Activated B cell treated with CpG ODN at 0.5 μM for 24 hours (primary cell): ENCODE measurements at regions of chr2 and their contacts with region 1.

Region 1: DNA sequence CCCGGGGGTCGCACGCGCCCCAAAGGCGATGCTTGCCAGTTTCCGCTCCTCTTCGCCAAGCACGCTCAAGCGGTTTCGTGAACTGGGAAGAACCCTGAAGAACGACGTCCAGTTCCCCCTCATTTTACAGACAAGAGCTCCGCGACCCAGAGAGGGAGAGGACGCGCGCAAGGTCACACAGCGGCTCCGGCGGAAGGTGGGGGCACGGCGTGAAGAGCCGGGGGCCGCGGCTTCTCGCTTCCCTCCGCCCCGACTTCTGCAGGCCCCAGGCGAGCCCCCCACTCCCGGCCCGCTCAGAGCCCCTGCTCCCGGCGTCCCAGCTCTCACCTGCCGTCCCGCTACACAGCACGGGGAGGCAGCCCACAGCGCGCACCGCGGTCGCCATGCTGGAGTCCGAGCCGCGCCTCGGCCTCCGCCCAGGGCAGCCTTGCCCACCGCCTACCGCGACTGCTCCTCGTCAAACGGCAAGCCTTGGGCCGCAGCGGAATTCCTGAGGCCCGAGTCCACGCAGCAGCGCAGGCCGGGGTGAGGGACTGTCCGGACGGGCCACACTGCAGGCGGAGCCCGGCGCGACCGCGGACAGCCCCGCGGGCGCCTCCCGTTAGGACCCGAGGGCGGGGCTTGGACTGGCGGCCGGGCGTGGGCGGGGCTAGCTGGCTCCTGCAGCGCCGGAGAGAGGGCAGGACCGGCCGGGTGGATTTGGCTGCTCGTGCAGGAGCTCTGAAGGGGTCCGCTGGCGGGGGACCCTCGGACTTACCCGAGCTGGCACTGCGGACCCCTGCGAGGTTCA is at the start of gene MRPS5:
- DNase-seq: peak; percentile 93
- ATAC-seq: peak; percentile 97
- H3K4me3 Mint-ChIP-seq: peak within 1 kb of the TSS; percentile 95
- H3K27ac Mint-ChIP-seq: peak within 1 kb of the TSS; percentile 89
- H3K4me1 Mint-ChIP-seq: peaks cover 44% of the 10 kb centered on the region
- H3K27me3 Mint-ChIP-seq: peaks cover 2% of the 10 kb centered on the region
- CTCF ChIP-seq: no peak
- total RNA-seq, gene MRPS5: 44.4 and 44.9 TPM in 2 replicates

Region 2: DNA sequence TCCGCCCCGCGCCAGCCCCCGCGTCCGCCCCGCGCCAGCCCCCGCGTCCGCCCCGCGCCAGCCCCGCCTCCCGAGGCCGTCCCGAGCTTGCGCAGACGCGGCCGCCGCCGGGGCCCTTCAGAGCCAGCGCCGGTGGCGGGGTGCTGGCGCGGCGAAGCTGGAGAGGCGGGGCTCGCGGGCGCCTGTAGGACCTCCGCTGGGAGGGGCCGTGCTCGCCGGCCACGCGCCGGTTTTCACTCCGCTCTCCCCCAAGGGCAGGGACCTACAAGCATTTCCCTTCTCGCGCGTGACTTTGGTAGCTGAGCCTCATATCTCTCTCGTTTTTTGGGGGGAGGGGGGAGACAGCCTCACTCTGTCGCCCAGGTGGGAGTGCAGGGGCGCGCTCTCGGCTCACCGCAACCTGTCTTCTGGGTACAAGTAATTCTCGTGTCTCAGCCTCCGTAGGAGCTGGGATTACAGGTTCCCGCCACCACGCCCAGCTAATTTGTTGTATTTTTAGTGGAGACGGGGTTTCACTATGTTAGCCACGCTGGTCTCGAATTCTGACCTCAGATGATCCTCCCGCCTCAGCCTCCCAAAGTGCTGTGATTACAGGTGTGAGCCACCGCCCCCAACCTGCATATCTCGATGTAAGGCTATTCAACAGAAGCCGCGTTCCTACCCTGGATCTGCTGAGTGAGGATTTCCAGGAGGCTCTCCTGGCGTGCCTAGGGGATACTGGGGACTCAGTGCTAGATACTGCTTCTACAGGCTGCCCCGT is 38.3 kb after region 1 on chr2 and contains the start of gene ZNF514:
- CTCF ChIA-PET with region 1: interaction called, 5 read pairs
- POLR2A ChIA-PET with region 1: interaction called, 40 read pairs
- intact Hi-C with region 1: loop called (anchors 1 kb)
- DNase-seq: peak; percentile 78
- ATAC-seq: peak; percentile 96
- H3K4me3 Mint-ChIP-seq: peak within 1 kb of the TSS; percentile 85
- H3K27ac Mint-ChIP-seq: peak within 1 kb of the TSS; percentile 79
- H3K4me1 Mint-ChIP-seq: peaks cover 21% of the 10 kb centered on the region
- H3K27me3 Mint-ChIP-seq: no peaks in the 10 kb centered on the region
- CTCF ChIP-seq: no peak
- total RNA-seq, gene ZNF514: 19.0 and 24.7 TPM in 2 replicates

Region 3: GRCh38 chr2:95165129-95166064 is 43.8 kb after region 1 on chr2 and contains the start of gene ZNF2:
- CTCF ChIA-PET with region 1: interaction called, 5 read pairs
- POLR2A ChIA-PET with region 1: interaction called, 40 read pairs
- intact Hi-C with region 1: loop called (anchors 1 kb)
- DNase-seq: peak; percentile 91
- ATAC-seq: peak; percentile 93
- H3K4me3 Mint-ChIP-seq: peak within 1 kb of the TSS; percentile 100
- H3K27ac Mint-ChIP-seq: peak within 1 kb of the TSS; percentile 97
- H3K4me1 Mint-ChIP-seq: peaks cover 27% of the 10 kb centered on the region
- H3K27me3 Mint-ChIP-seq: no peaks in the 10 kb centered on the region
- CTCF ChIP-seq: no peak
- total RNA-seq, gene ZNF2: 4.9 and 5.3 TPM in 2 replicates

Region 4: DNA sequence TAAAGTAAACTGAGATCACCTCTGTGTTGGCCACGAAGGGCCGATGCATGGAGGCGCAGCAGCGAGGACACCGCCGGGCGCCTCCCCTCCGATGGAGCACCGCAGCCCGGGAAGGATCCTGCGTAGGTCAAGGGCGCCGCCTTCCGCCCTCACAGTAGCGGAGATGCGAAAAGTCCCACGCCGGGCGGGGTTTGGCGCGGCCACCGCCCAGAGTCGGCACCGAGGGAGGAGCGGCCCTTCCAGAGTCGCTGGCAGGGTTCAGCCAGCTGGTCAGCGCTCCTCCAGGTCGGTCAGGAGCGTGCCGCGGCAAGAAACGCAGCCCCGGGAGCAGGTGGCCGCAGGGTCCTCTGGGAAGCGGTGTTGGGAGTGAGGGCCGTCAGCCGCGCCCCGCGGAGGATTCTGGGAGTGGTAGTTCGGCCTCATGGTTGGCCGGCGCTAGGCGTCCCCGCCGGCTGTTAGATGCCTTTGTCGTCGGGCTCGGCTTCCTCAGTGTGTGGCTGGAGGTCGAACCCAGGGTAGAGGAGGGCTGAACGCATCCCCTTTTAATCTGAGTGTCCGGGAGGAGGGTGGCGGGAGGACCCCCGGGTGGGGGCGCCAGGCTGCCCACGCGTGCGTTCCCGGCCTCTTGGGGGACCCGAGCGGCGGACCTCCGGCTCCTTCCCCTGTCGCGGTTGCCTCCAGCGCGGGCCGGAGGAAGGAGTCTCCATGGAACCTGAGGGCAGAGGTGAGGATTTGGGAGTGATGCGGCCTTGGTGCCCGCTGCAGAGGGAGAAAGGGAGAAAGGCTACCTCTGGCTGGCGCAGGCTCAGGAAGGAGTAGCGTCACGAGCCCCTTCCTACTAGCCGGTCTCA is 85.7 kb after region 1 on chr2 and contains the start of gene ZNF892:
- CTCF ChIA-PET with region 1: no interaction called
- POLR2A ChIA-PET with region 1: no interaction called
- intact Hi-C with region 1: loop called (anchors 1 kb)
- DNase-seq: peak; percentile 81
- ATAC-seq: peak; percentile 97
- H3K4me3 Mint-ChIP-seq: peak within 1 kb of the TSS; percentile 94
- H3K27ac Mint-ChIP-seq: peak within 1 kb of the TSS; percentile 79
- H3K4me1 Mint-ChIP-seq: peaks cover 16% of the 10 kb centered on the region
- H3K27me3 Mint-ChIP-seq: no peaks in the 10 kb centered on the region
- CTCF ChIP-seq: no peak
- total RNA-seq, gene ZNF892: 4.0 and 4.3 TPM in 2 replicates